Left cardiac atrium (tissue), 4 donors: ENCODE measurements at regions of chr3 and their contacts with region 1.

Region 1: GRCh38 chr3:195774917-195775316 is 36.8 kb downstream of the MUC4 start:
- DNase-seq: peak; percentile 48
- ATAC-seq: peak; percentile 11 to 71

Region 2: DNA sequence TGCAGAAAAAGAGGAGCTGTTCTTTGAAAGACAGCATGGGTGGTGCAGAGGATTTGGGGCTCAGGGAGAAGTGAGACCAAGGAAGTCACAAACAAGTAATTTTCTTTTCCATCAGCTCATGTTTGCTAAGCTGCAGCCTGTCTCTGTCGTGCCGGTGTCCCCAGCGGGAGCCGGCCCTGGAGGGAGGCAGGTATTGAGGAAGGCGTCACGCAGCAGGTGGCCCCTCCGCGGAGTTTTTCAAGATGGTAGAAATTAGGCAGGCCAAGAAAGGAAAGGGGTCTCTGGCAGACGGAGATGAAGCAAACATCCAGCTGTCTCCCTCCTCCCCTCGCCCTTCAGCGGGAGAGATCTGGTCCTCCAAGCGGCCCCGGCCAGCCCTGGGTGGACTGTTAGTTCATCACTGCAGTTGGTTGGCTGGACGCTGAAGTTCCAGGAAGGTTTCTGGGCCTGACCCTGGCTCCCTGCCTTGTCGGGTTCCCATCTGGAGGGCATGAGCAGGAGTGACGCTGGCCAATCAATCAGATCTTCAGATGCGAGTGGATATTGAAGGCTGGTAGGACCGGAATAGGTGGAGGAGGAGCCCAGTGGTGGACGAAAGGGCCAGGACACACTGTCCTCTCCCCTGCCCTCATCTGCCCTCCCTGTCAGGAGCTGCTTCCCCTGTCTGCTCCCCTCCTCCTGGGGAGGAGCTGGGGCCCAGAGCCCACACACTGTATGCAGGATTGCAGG is 64.5 kb after region 1 on chr3:
- intact Hi-C with region 1: loop called in 1 of 2 experiments (anchors 5 kb)
- DNase-seq: no peak
- ATAC-seq: peak in 1 of 2 donors; percentile 27